ENCODE measurements at regions of chr13 and their contacts with region 1.

Region 1: GRCh38 chr13:46321494-46322225 is 65.4 kb downstream of the RUBCNL start:
- DNase-seq: peak; percentile 84
- H3K4me3 ChIP-seq: no peak overlapping the region
- H3K27ac ChIP-seq: no peak overlapping the region
- H3K4me1 ChIP-seq: peaks cover 7% of the 10 kb centered on the region
- CTCF ChIP-seq: peak; percentile 97

Region 2: GRCh38 chr13:45511310-45512097 is 810.2 kb before region 1 on chr13:
- CTCF ChIA-PET with region 1: no interaction called
- POLR2A ChIA-PET with region 1: no interaction called
- intact Hi-C with region 1: loop called (anchors 1 kb)
- DNase-seq: peak; percentile 72
- H3K4me3 ChIP-seq: no peak overlapping the region
- H3K27ac ChIP-seq: no peak overlapping the region
- H3K4me1 ChIP-seq: peaks cover 6% of the 10 kb centered on the region
- CTCF ChIP-seq: peak; percentile 96

Region 3: DNA sequence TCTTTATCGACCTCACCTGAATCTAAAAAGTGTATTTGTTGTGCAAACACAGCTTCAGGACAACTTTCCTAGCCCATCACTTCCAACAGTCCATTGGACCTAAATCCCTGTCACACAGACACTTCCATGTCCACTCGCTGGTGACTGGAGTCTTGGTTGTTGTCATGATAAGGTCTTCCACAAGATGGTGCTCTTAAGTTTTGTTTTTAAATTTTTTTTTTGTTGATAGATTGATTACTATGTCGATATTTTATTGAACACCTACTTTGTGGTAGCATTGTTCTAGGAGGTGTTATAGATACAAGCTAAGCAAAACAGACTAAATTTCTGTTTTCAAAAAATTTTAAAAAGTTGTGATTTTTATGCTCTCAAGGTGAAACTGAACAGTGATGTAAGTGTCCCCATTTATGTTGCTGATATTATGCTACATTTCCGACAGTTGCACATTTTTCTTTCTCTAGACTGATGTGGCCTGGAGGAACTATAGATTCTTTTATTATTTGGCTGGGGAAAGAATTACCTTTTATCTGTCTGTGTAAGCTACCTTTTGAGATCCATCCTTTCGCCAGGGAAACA is 698.1 kb before region 1 on chr13:
- CTCF ChIA-PET with region 1: no interaction called
- POLR2A ChIA-PET with region 1: no interaction called
- intact Hi-C with region 1: loop called (anchors 1 kb)
- DNase-seq: peak; percentile 14
- H3K4me3 ChIP-seq: no peak overlapping the region
- H3K27ac ChIP-seq: no peak overlapping the region
- H3K4me1 ChIP-seq: no peaks in the 10 kb centered on the region
- CTCF ChIP-seq: peak; percentile 82

Region 4: DNA sequence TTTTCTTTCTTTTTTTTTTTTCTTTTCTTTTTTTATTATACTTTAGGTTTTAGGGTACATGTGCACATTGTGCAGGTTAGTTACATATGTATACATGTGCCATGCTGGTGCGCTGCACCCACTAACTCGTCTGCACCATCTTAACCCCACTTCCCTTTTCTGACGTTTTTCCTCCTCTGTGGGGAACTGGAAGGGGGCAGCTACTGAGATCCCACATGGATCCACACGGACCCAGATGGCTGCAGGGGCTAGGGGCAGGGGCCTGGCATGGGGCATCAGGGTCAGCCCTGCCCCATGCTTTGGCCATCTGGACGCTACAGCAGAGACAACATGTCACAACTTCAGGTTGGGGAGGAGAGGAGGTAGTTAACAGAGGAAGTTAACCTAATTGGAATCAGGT is 11.1 kb after region 1 on chr13:
- CTCF ChIA-PET with region 1: no interaction called
- POLR2A ChIA-PET with region 1: interaction called, 10 read pairs
- intact Hi-C with region 1: no loop called
- DNase-seq: no peak
- H3K4me3 ChIP-seq: no peak overlapping the region
- H3K27ac ChIP-seq: no peak overlapping the region
- H3K4me1 ChIP-seq: peaks cover 25% of the 10 kb centered on the region
- CTCF ChIP-seq: no peak

Region 5: GRCh38 chr13:46587807-46588418 is 266.3 kb after region 1 on chr13:
- CTCF ChIA-PET with region 1: no interaction called
- POLR2A ChIA-PET with region 1: no interaction called
- intact Hi-C with region 1: no loop called
- DNase-seq: peak; percentile 52
- H3K4me3 ChIP-seq: peak overlapping the region; percentile 61
- H3K27ac ChIP-seq: peak overlapping the region; percentile 78
- H3K4me1 ChIP-seq: peaks cover 99% of the 10 kb centered on the region
- CTCF ChIP-seq: no peak